Activated CD4-positive, alpha-beta memory T cell treated with anti-CD3 and anti-CD28 coated beads for 36 hours (primary cell): ENCODE measurements at regions of chr5 and their contacts with region 1.

Region 1: DNA sequence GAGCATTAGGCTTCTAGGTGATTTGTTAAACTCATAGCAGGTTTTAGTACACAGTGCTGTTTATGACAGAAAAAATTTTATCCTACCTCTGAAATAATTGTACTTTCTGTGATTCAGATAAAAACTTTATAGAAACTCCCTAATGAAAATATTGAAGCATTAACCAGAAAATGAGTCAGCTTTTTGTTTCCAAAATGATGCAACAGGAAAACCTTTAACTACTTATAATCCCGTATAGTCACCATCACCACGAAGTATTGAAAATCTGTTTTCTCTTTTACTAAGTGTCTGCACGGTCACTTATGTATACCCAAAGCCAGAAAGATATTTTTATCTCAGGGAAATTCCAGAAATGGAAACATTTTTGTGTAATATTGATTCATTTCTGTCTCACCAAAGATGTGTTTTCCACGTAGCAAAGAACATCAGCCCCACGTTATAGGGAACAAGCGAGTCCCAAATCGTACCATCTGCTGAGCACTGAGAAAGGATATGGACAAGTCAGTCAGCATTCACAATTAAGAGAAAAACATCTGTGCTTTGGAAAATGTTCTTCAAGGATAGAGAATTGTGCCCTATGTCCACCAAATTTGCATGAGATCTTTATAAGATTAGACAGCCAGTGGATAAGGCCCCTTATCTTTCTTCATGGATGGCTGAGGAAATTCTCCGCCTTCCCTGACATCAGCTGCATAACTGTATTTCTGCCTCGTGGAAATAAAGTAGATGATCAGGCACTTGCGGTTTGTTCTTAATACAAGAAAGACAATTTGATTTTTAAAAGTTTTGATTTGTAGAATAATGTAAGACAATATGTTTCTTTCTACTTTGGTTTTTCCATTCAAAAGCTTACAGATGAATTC is 41.9 kb downstream of the TNFAIP8 start:
- DNase-seq: peak; percentile 50
- H3K4me3 Mint-ChIP-seq: peak overlapping the region; percentile 39
- H3K27ac Mint-ChIP-seq: peak overlapping the region; percentile 90
- H3K4me1 Mint-ChIP-seq: peaks cover 84% of the 10 kb centered on the region
- H3K27me3 Mint-ChIP-seq: no peaks in the 10 kb centered on the region

Region 2: DNA sequence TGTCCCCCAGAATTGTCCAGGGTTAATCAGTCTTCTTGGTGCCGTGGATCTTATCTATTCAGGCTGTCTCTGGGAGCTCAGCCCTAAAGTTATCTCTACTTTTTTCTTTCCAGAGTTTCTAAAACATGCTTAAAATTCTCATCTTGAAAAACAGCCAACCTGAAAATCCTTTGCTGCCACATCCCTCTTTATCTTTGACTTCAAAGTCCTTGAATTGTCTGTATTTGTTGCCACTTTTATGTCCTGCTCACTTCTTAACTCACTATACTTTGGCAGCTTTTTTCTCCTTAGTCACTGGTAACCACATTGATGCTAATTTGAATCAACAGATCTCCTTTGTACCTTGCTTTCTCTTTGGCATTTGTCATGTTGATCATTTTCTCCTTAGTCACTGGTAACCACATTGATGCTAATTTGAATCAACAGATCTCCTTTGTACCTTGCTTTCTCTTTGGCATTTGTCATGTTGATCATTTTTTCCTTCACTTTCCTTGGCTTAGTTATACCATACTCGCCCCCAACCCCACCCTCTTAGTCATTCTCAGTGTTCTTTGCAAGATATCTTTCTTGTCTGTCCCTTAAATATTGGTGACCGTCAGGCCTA is 318.3 kb before region 1 on chr5:
- CTCF ChIA-PET with region 1: no interaction called
- POLR2A ChIA-PET with region 1: interaction called, 3 read pairs
- intact Hi-C with region 1: loop called (anchors 1 kb)
- DNase-seq: peak; percentile 65
- H3K4me3 Mint-ChIP-seq: peak overlapping the region; percentile 23
- H3K27ac Mint-ChIP-seq: peak overlapping the region; percentile 50
- H3K4me1 Mint-ChIP-seq: peaks cover 51% of the 10 kb centered on the region
- H3K27me3 Mint-ChIP-seq: no peaks in the 10 kb centered on the region

Region 3: DNA sequence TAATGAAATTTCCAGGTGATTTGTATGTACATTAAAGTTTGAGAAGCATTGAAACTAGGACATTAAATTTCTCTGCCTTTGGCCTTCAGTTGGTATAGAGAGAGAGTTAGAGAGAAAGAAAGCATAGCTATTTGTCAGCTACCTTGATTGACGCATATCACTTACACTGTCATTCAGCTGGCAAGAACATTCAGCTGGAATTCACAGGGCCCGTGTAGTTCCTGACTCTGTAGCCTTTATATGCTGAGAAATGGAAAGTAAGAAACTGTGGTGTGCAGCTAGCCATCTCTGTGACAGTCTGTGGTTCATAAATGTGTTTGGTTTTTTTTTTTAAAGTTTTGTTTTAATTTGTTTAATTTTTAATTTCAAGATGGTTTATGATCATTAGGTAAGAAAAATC is 268.0 kb before region 1 on chr5:
- CTCF ChIA-PET with region 1: no interaction called
- POLR2A ChIA-PET with region 1: no interaction called
- intact Hi-C with region 1: no loop called
- DNase-seq: no peak
- H3K4me3 Mint-ChIP-seq: no peak overlapping the region
- H3K27ac Mint-ChIP-seq: no peak overlapping the region
- H3K4me1 Mint-ChIP-seq: no peaks in the 10 kb centered on the region
- H3K27me3 Mint-ChIP-seq: no peaks in the 10 kb centered on the region

Region 4: DNA sequence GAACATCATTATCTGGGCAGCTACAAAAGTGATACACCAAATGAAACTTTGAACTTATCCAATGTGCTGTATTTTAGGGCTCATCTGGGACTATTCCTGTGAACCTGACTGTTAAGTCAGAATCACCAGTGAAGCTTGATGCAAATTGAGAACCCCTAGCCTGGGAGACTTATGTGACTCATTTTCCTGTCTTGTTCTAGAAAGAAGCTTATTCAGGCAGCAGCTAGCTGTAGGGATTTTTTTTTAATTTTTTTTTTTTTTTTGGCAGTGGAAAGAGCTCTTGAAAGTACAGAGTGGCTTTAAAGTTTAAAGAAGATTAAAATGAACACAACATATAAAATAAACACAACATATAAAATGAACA is 123.0 kb before region 1 on chr5:
- CTCF ChIA-PET with region 1: no interaction called
- POLR2A ChIA-PET with region 1: interaction called, 4 read pairs
- intact Hi-C with region 1: loop called (anchors 1 kb)
- DNase-seq: no peak
- H3K4me3 Mint-ChIP-seq: peak overlapping the region; percentile 78
- H3K27ac Mint-ChIP-seq: peak overlapping the region; percentile 99
- H3K4me1 Mint-ChIP-seq: peaks cover 88% of the 10 kb centered on the region
- H3K27me3 Mint-ChIP-seq: peaks cover 1% of the 10 kb centered on the region

Region 5: DNA sequence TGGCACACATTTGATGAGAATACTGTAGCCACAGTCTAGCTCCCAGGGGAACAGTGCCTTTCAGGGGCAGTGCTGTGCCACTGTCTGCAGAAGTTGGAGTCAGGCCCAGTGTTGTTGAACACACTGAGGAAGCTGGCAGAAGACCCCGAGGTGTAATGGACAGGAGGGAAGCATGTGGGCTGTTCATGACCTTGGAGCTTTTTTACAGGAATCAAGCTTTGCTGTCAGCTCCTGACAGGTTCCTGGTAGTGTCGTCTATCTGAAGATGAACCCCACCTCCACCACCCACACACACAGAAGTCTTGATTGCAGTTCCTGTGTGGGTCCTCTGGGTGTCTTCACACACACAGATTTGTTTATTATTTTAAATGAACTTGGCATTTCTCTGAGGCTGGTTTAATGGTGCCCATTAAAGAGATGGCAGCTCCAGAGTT is 82.2 kb before region 1 on chr5:
- CTCF ChIA-PET with region 1: interaction called, 3 read pairs
- POLR2A ChIA-PET with region 1: interaction called, 3 read pairs
- intact Hi-C with region 1: loop called (anchors 1 kb)
- DNase-seq: peak; percentile 78
- H3K4me3 Mint-ChIP-seq: peak overlapping the region; percentile 30
- H3K27ac Mint-ChIP-seq: peak overlapping the region; percentile 89
- H3K4me1 Mint-ChIP-seq: peaks cover 93% of the 10 kb centered on the region
- H3K27me3 Mint-ChIP-seq: no peaks in the 10 kb centered on the region

Region 6: GRCh38 chr5:119340597-119341218 is 57.0 kb before region 1 on chr5:
- CTCF ChIA-PET with region 1: interaction called, 4 read pairs
- POLR2A ChIA-PET with region 1: interaction called, 4 read pairs
- intact Hi-C with region 1: loop called (anchors 1 kb)
- DNase-seq: peak; percentile 78
- H3K4me3 Mint-ChIP-seq: peak overlapping the region; percentile 66
- H3K27ac Mint-ChIP-seq: peak overlapping the region; percentile 93
- H3K4me1 Mint-ChIP-seq: peaks cover 94% of the 10 kb centered on the region
- H3K27me3 Mint-ChIP-seq: no peaks in the 10 kb centered on the region

Region 7: DNA sequence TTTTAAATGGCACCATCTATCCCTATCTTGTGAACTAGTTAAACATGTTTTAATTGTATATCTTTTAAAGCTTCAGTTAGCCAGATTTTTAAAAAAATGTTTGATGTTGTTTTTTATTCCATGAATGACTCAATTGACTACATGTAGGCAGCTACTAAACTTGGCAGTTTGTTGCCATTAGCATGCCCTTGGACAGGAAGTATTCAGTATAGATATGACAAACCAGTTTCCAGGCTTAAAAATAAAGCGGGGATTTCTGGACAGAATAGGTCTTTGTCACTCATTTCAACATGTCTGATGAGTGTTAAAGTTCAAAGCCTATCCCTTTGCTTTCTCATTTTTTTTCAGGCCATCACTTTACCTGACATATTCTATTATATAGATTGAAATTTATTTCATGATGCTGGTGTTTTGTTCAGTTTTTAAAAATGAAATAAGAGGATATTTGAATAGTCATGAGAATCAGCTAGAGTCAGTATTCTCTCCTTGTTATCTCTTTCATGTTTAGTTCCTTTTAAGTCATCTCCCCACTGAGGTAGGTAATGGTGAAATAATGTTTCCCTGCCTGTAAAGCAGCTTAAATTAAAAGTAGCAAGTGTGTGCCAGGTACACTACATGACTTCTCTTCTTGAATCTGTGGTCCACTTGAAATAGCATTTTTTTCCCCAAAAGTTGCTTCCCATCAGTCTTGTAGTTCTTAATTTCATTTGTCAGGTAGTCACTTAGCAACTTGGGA is 30.1 kb before region 1 on chr5:
- CTCF ChIA-PET with region 1: interaction called, 3 read pairs
- POLR2A ChIA-PET with region 1: interaction called, 7 read pairs
- intact Hi-C with region 1: loop called (anchors 1 kb)
- DNase-seq: no peak
- H3K4me3 Mint-ChIP-seq: peak overlapping the region; percentile 55
- H3K27ac Mint-ChIP-seq: peak overlapping the region; percentile 90
- H3K4me1 Mint-ChIP-seq: peaks cover 83% of the 10 kb centered on the region
- H3K27me3 Mint-ChIP-seq: no peaks in the 10 kb centered on the region